ENCODE measurements at regions of chr12 and their contacts with region 1.

Region 1: DNA sequence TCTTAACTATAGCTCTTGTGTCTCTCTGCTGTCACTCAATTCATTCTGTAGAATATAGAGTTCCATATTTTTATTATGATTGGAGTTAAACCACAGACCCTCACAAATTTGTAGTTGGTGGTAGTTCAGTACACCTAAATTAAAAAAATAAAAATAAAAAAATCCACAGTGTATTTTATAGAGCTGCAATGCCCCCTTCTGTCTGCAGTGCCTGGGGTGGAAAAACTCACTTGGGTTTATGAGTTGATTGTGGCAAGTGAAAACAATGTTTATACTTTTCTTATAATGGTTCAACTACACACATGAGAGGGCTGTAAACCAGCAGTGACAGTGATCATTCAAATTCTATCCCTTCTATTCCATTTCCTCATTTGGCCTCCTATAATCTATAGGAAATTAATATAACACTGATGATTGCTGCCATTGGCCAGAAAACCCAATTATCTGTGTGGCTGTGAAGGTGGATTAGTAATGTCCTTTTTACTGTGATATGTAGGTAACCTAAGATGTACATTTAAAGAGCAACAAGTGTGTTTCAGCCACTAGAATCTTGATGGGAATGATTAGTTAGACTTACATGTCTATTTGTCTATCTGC is 166.9 kb upstream of the LRIG3 start:
- DNase-seq: peak; percentile 54
- H3K4me3 ChIP-seq: no peak overlapping the region
- H3K27ac ChIP-seq: no peak overlapping the region
- H3K4me1 ChIP-seq: peaks cover 47% of the 10 kb centered on the region
- H3K27me3 ChIP-seq: no peaks in the 10 kb centered on the region

Region 2: GRCh38 chr12:57983146-57983857 is 1103.9 kb before region 1 on chr12:
- in situ Hi-C with region 1: loop called (anchors 25 kb)
- DNase-seq: peak; percentile 75
- H3K4me3 ChIP-seq: no peak overlapping the region
- H3K27ac ChIP-seq: no peak overlapping the region
- H3K4me1 ChIP-seq: peaks cover 6% of the 10 kb centered on the region; the same call in 1 of the 2 replicates
- H3K27me3 ChIP-seq: no peaks in the 10 kb centered on the region

Region 3: GRCh38 chr12:58346032-58346632 is 741.0 kb before region 1 on chr12:
- in situ Hi-C with region 1: loop called (anchors 10 kb)
- DNase-seq: peak; percentile 69
- H3K4me3 ChIP-seq: no peak overlapping the region
- H3K27ac ChIP-seq: no peak overlapping the region
- H3K4me1 ChIP-seq: peaks cover 16% of the 10 kb centered on the region; the same call in 1 of the 2 replicates
- H3K27me3 ChIP-seq: no peaks in the 10 kb centered on the region

Region 4: GRCh38 chr12:58540480-58541299 is 546.5 kb before region 1 on chr12:
- in situ Hi-C with region 1: loop called (anchors 25 kb)
- DNase-seq: peak; percentile 89
- H3K4me3 ChIP-seq: peak overlapping the region; percentile 27; the same call in 1 of the 2 replicates
- H3K27ac ChIP-seq: peak overlapping the region; percentile 11
- H3K4me1 ChIP-seq: peaks cover 34% of the 10 kb centered on the region
- H3K27me3 ChIP-seq: no peaks in the 10 kb centered on the region

Region 5: GRCh38 chr12:58919231-58920101 is 167.7 kb before region 1 on chr12:
- in situ Hi-C with region 1: loop called (anchors 10 kb)
- DNase-seq: peak; percentile 70
- H3K4me3 ChIP-seq: peak overlapping the region; percentile 95
- H3K27ac ChIP-seq: peak overlapping the region; percentile 81
- H3K4me1 ChIP-seq: peaks cover 34% of the 10 kb centered on the region
- H3K27me3 ChIP-seq: no peaks in the 10 kb centered on the region